Panc1 (cell line): ENCODE measurements at regions of chr7 and their contacts with region 1.

Region 1: DNA sequence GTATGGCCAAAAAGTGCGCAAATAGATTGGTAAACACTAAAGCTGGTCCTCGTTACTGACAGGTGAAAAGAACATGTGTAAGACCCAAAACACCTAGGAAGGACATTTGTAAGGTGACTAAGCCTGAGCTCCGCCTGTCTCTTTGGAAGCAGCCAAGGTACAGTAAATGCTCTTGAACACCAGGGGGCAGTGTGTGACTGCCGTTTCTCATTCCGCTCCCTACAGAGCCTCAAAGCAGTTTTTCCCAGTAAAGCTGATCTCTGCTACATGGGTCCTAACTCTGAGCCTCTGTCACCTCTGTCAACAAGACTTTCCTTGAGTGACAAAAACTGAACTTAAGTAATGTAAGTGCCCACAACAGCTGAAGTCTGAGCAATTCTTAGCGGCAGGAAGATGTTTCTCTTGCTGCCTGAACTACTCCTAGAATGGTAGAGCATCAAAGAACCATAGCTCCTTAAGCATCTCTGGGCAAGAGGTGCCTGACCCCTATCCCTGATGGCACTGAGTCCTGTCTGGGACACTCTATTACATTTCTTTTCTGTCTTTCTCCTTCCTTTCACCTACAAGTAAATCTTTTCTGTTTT is 238.0 kb upstream of the INHBA start:
- DNase-seq: no peak
- ATAC-seq: peak; percentile 88
- H3K4me3 ChIP-seq: no peak overlapping the region
- H3K27ac ChIP-seq: no peak overlapping the region
- H3K4me1 ChIP-seq: peaks cover 3% of the 10 kb centered on the region; the same call in 1 of the 2 replicates
- H3K27me3 ChIP-seq: 0 out of 2 replicates have a peak, but pooled peaks cover 3% of the 10 kb centered on the region
- CTCF ChIP-seq: peak; percentile 95

Region 2: GRCh38 chr7:41955893-41956675 is 15.2 kb after region 1 on chr7:
- CTCF ChIA-PET with region 1: interaction called, 15 read pairs
- POLR2A ChIA-PET with region 1: no interaction called
- in situ Hi-C with region 1: no loop called
- intact Hi-C with region 1: no loop called
- DNase-seq: no peak
- ATAC-seq: peak; percentile 96
- H3K4me3 ChIP-seq: no peak overlapping the region; a peak in 1 of 4 replicates
- H3K27ac ChIP-seq: peak overlapping the region; percentile 72
- H3K4me1 ChIP-seq: peaks cover 26% of the 10 kb centered on the region
- H3K27me3 ChIP-seq: no peaks in the 10 kb centered on the region
- CTCF ChIP-seq: no peak

Region 3: DNA sequence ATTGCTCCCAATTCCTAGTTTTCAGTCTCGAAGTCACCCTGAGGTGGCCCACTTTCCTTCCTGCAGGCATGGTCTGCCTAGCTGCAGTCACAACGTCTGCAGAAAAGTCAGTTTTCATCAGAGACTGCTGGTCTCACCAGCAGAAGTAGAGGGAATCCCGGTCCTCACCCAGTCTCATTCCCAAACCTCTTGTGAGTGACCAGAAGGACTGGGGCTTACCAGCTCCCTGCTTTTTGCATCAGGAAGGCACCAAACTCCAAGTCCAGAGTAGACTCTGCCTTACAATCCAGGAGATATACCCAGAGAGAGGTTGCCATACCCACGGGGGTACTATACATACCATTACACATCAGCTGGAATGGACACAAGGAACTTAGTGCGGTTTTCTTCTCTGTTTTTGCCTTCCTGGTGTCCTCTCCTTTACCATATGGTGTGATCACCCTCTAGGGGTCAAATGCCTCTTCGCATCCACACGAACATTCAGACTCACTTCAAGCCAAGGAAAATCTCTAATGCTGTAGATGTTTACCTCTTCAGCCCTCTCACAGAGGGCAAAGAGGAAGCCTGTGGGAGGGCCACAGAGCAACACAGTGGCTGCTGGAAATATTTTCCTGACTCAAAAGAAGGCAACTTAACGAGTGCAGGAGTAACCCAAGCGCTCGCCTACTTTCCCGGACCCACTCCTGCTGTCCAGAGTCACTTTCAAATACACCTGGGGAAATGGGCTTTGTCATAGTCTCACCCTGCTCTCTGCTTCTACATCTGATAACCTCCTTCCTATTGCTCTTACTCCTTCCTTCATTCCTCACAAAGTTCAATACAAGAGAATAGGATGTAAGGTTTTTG is 750.2 kb after region 1 on chr7:
- CTCF ChIA-PET with region 1: interaction called, 3 read pairs
- POLR2A ChIA-PET with region 1: no interaction called
- in situ Hi-C with region 1: no loop called
- intact Hi-C with region 1: loop called (anchors 1 kb)
- DNase-seq: no peak
- ATAC-seq: peak; percentile 86
- H3K4me3 ChIP-seq: no peak overlapping the region
- H3K27ac ChIP-seq: no peak overlapping the region
- H3K4me1 ChIP-seq: no peaks in the 10 kb centered on the region
- H3K27me3 ChIP-seq: no peaks in the 10 kb centered on the region
- CTCF ChIP-seq: peak; percentile 69

Region 4: DNA sequence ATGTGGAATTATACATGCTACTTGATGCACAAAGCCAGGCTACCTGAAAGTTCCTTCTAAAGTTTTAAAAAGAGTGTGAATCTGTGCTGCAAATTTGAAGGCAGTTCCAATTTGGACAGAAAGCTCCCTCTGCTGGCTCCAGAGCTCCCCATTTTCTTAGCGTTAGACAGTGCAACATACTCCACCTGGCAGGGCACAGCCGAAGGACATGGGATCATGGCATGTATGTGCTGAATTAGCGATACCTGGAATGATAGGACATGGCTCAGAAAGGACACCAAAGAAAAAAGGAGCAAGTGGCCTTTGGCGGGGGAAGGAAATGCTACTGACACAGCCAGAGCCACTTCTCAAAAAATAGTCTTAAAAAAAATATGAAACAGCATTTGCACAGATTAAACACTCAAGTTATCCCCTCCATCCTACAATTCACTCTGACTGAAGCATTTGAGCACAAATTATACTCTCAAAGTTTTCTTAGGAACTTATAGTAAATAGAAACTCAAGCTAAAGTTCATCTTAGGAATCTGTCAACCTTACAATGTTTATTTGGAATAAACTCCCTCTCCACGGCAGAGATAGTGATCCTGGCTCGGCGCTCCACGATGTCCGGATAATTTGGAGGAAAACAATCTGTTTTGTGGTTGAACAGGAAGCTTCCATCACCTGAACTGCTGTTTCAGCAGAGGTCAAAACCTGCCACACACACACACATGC is 891.0 kb after region 1 on chr7:
- CTCF ChIA-PET with region 1: interaction called, 8 read pairs
- POLR2A ChIA-PET with region 1: no interaction called
- in situ Hi-C with region 1: no loop called
- intact Hi-C with region 1: loop called (anchors 2 kb)
- DNase-seq: no peak
- ATAC-seq: peak; percentile 86
- H3K4me3 ChIP-seq: no peak overlapping the region
- H3K27ac ChIP-seq: no peak overlapping the region
- H3K4me1 ChIP-seq: no peaks in the 10 kb centered on the region
- H3K27me3 ChIP-seq: peaks cover 4% of the 10 kb centered on the region
- CTCF ChIP-seq: peak; percentile 80

Region 5: DNA sequence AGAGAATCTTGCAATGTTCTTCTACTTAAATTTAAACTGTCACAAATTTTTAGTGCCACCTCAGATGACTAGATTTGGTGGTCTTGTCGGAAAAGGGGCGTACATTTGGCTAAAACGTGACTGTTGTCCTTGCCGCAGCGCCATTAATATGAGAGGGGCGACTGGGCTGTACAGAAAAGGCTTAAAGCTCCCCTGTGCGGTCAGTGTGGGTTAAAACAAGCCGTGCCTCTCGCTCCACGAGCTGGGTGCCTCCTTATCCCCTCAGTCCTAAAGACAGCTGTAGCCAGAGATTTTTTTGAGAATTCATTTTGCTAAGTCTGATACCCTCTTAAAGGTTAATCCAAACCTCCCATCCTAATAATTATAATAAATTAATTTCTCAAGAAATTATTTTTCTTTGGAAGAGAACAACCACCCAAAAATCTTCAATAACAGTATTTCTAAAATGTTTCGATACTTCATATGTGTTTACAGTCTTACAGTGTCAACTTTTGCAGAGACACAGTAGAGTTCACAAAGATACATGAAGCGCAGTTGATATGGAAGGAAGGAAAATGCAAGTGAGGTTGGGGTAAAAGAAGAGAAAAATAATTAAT is 902.5 kb after region 1 on chr7:
- CTCF ChIA-PET with region 1: interaction called, 12 read pairs
- POLR2A ChIA-PET with region 1: interaction called, 4 read pairs
- in situ Hi-C with region 1: no loop called
- intact Hi-C with region 1: loop called (anchors 2 kb)
- DNase-seq: no peak
- ATAC-seq: peak; percentile 98
- H3K4me3 ChIP-seq: no peak overlapping the region
- H3K27ac ChIP-seq: no peak overlapping the region
- H3K4me1 ChIP-seq: no peaks in the 10 kb centered on the region
- H3K27me3 ChIP-seq: peaks cover 13% of the 10 kb centered on the region
- CTCF ChIP-seq: peak; percentile 87

Region 6: GRCh38 chr7:42876182-42877068 is 935.6 kb after region 1 on chr7:
- CTCF ChIA-PET with region 1: interaction called, 19 read pairs
- POLR2A ChIA-PET with region 1: no interaction called
- in situ Hi-C with region 1: no loop called
- intact Hi-C with region 1: loop called (anchors 2 kb)
- DNase-seq: peak; percentile 54
- ATAC-seq: peak; percentile 91
- H3K4me3 ChIP-seq: no peak overlapping the region
- H3K27ac ChIP-seq: no peak overlapping the region
- H3K4me1 ChIP-seq: no peaks in the 10 kb centered on the region
- H3K27me3 ChIP-seq: no peaks in the 10 kb centered on the region; the same call in 1 of the 2 replicates
- CTCF ChIP-seq: peak; percentile 93